Upper lobe of right lung (tissue), 1 donor: ENCODE measurements at regions of chr6 and their contacts with region 1.

Region 1: GRCh38 chr6:144013486-144013909 is 5.4 kb upstream of the PLAGL1 start:
- DNase-seq: peak; percentile 85
- ATAC-seq: peak; percentile 93
- H3K4me3 ChIP-seq: no peak overlapping the region
- H3K27ac ChIP-seq: no peak overlapping the region
- H3K4me1 ChIP-seq: no peaks in the 10 kb centered on the region
- H3K27me3 ChIP-seq: no peaks in the 10 kb centered on the region
- CTCF ChIP-seq: peak; percentile 94

Region 2: DNA sequence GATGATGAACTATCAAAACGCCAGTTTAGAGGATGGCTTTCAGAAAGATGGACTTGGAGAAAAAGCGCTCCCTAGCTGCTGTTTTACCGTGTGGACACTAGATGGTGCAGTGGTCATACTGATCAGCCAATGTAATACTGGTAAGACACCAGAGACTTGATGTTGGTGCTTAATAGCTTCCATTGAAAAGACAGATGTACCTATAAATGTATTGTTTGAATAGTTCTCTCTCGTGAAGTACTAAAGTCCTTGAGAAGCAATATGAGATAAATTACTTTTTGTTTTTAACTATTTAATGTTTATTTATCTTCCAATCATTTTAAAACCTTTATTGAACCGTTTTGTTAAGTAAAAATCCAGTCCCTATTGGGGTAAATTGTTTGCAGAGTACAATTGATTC is 438.1 kb before region 1 on chr6:
- intact Hi-C with region 1: loop called (anchors 5 kb)
- DNase-seq: no peak
- ATAC-seq: peak; percentile 99
- H3K4me3 ChIP-seq: no peak overlapping the region
- H3K27ac ChIP-seq: no peak overlapping the region
- H3K4me1 ChIP-seq: no peaks in the 10 kb centered on the region
- H3K27me3 ChIP-seq: no peaks in the 10 kb centered on the region
- CTCF ChIP-seq: peak; percentile 90

Region 3: DNA sequence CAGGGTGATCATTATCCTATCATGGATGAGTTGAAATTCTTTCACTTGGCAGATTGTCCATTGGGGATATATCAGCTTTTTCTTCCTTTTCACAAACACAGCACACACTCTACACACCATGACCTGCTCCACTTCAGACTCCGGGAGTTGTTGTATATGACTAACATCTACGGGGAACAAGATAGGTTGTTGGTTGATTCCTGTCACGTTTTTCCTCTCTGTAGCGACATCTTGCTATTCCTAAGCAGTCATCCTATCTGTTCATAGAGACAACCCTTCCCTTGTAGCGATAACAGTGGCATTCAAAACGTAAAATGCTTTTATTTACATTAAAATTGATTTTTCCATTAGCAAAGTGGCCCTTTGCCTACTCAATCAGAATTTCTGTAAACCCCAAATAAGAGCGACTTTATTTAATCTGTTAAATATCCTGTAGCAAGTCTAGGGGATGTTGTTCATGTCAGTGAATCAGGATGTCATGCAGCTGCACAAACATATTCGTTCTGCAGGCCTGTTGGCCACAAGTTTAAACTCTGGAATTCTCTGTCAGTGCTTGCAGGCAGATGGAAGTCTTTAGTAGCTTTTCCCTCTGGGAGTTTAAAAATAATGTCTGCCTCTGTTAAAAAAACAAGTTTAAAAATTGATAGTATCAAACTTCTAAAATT is 312.7 kb before region 1 on chr6:
- intact Hi-C with region 1: no loop called
- DNase-seq: no peak
- ATAC-seq: no peak
- H3K4me3 ChIP-seq: no peak overlapping the region
- H3K27ac ChIP-seq: peak overlapping the region; percentile 34
- H3K4me1 ChIP-seq: peaks cover 56% of the 10 kb centered on the region
- H3K27me3 ChIP-seq: no peaks in the 10 kb centered on the region
- CTCF ChIP-seq: no peak

Region 4: DNA sequence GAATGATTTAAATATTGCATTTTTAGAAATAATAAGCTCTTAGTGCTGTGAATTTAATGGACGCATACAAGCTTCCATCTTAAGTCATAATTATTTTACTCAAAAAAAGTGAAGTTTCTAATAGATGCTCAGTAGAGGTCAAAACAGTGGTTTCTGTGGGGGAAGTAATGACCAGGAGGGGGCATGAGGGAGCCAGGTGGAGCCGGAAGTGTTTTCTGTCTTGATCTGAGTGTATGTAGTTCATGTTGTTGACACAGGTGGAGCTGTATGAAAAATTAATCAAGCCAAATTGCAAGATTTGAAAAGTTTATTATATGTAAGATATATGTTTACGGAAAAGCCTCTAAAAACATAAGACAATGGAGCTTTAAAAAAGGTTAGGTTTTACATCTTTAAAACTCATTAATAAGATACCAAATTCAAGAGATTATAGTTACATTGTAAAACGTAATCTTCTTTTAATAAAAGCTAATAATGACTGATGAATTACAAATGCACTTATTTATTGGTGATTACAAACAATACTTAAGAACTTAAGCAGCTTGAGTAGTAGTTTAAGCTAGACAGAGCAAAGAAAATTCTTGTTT is 73.4 kb before region 1 on chr6:
- intact Hi-C with region 1: loop called (anchors 5 kb)
- DNase-seq: no peak
- ATAC-seq: peak; percentile 92
- H3K4me3 ChIP-seq: no peak overlapping the region
- H3K27ac ChIP-seq: no peak overlapping the region
- H3K4me1 ChIP-seq: no peaks in the 10 kb centered on the region
- H3K27me3 ChIP-seq: no peaks in the 10 kb centered on the region
- CTCF ChIP-seq: peak; percentile 77

Region 5: GRCh38 chr6:143961886-143962873 is 51.3 kb before region 1 on chr6:
- intact Hi-C with region 1: no loop called
- DNase-seq: no peak
- ATAC-seq: peak; percentile 47
- H3K4me3 ChIP-seq: no peak overlapping the region
- H3K27ac ChIP-seq: no peak overlapping the region
- H3K4me1 ChIP-seq: peaks cover 16% of the 10 kb centered on the region
- H3K27me3 ChIP-seq: no peaks in the 10 kb centered on the region
- CTCF ChIP-seq: peak; percentile 45

Region 6: DNA sequence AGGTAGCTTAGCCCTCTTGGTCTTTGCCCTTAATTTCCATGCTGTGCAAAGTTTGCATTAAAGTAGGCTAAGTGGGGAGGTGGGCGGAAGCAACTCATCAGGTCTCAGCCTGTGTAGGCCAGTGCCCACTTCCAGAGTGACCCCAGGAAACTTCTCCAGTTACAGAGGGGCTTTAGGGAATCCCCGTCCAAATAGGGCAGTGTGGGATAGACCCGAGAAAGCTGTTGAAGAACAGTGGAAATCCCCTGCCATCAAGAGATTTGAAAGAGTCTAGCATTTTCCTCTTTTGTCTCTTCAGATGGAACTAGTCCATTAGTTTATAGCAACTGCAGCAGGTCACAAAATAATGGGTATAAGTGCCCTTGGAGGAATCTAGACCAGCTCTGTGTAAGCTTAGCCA is 61.7 kb after region 1 on chr6:
- intact Hi-C with region 1: no loop called
- DNase-seq: no peak
- ATAC-seq: no peak
- H3K4me3 ChIP-seq: no peak overlapping the region
- H3K27ac ChIP-seq: no peak overlapping the region
- H3K4me1 ChIP-seq: no peaks in the 10 kb centered on the region
- H3K27me3 ChIP-seq: no peaks in the 10 kb centered on the region
- CTCF ChIP-seq: no peak